K562 (cell line): ENCODE measurements at regions of chr20 and their contacts with region 1.

Region 1: GRCh38 chr20:50790651-50791277 is 4.1 kb upstream of the BCAS4 start:
- DNase-seq: peak; percentile 90 to 96 (median 92)
- ATAC-seq: peak; percentile 96
- H3K4me3 ChIP-seq: no peak overlapping the region
- H3K27ac ChIP-seq: peak overlapping the region; percentile 87
- H3K4me1 ChIP-seq: peaks cover 22 to 27% of the 10 kb centered on the region in 2 experiments
- H3K27me3 ChIP-seq: no peaks in the 10 kb centered on the region
- CTCF ChIP-seq: peak; percentile 85 to 90 (median 88)
- EP300 ChIP-seq: peak; percentile 57; the same call in 1 of the 2 replicates
- POLR2A ChIP-seq: peak; percentile 83
- RAD21 ChIP-seq: peak; percentile 45 to 47

Region 2: DNA sequence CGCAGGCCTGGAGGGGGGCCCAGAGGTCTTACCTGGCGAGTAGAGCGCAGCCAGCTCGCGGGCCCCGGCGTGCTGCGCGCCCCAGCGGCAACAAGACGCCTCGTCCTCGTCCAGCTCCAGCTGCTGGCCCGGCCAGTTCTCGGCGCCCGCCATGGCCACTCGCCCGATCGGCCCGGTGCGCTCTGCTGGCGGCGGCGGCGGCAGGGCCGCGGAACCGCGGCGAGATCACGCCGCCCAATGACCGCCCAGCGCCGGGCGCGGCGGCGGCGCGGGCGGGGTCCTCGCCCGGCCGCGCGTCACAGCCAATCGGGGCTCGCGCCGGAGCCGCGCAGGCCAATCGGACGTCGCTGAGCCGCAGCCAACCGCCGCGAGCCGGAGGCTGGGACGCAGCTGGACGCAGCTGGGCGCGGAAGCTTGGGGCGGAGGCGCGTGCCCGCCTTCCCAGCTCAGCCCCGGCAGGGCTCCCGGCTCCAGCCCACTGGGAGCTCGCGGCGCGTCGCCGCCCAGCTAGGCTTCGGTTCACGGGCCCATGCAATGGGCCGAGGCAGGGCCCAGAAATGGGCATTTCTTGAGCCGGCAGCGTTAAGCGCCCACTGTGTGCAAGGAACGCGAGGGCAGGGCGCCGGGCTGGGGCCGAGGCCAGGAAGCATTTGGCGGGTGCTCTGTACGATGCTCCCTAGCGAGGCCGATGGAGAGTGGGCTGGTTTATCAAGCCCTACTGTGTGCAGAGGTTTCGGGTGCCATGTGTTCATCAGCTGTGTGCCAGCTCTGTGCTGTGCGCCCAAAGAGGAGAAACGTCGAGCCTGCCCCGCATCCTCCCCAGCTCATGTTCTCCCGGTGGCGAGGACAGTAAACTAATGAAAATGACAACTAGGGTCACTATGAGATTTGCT is 637.0 kb before region 1 on chr20 and contains the start of gene PEDS1:
- CTCF ChIA-PET with region 1: no interaction called
- POLR2A ChIA-PET with region 1: no interaction called
- in situ Hi-C with region 1: no loop called
- intact Hi-C with region 1: no loop called
- DNase-seq: peak; percentile 93 to 98 (median 98)
- ATAC-seq: peak; percentile 97
- H3K4me3 ChIP-seq: peak within 1 kb of the TSS; percentile 93
- H3K27ac ChIP-seq: peak within 1 kb of the TSS; percentile 92
- H3K4me1 ChIP-seq: peaks cover 27 to 52% of the 10 kb centered on the region in 2 experiments
- H3K27me3 ChIP-seq: no peaks in the 10 kb centered on the region
- CTCF ChIP-seq: no peak
- EP300 ChIP-seq: no peak
- POLR2A ChIP-seq: peak; percentile 84
- RAD21 ChIP-seq: no peak
- polyA plus RNA-seq, gene PEDS1: 2.9 to 3.9 TPM

Region 3: GRCh38 chr20:50594591-50595432 is 196.0 kb before region 1 on chr20:
- CTCF ChIA-PET with region 1: no interaction called
- POLR2A ChIA-PET with region 1: no interaction called
- in situ Hi-C with region 1: no loop called
- intact Hi-C with region 1: loop called (anchors 5 kb)
- DNase-seq: peak in 2 of 4 experiments; percentile 31
- ATAC-seq: peak; percentile 18
- H3K4me3 ChIP-seq: no peak overlapping the region
- H3K27ac ChIP-seq: no peak overlapping the region
- H3K4me1 ChIP-seq: peaks cover 0 to 13% of the 10 kb centered on the region in 2 experiments; a peak in 1 of 5 replicates
- H3K27me3 ChIP-seq: no peaks in the 10 kb centered on the region
- CTCF ChIP-seq: no peak
- EP300 ChIP-seq: no peak
- POLR2A ChIP-seq: peak; percentile 19; the same call in 1 of the 2 replicates
- RAD21 ChIP-seq: no peak

Region 4: GRCh38 chr20:50625986-50626677 is 164.6 kb before region 1 on chr20:
- CTCF ChIA-PET with region 1: interaction called, 20 read pairs
- POLR2A ChIA-PET with region 1: interaction called, 3 read pairs
- in situ Hi-C with region 1: no loop called
- intact Hi-C with region 1: loop called (anchors 5 kb)
- DNase-seq: peak; percentile 68 to 78 (median 73)
- ATAC-seq: peak; percentile 91
- H3K4me3 ChIP-seq: no peak overlapping the region
- H3K27ac ChIP-seq: no peak overlapping the region
- H3K4me1 ChIP-seq: peaks cover 0 to 31% of the 10 kb centered on the region in 2 experiments; a peak in 3 of 5 replicates
- H3K27me3 ChIP-seq: no peaks in the 10 kb centered on the region
- CTCF ChIP-seq: peak; percentile 83 to 87 (median 83)
- EP300 ChIP-seq: no peak
- POLR2A ChIP-seq: no peak
- RAD21 ChIP-seq: peak; percentile 78 to 95

Region 5: GRCh38 chr20:50744143-50744792 is 46.5 kb before region 1 on chr20:
- CTCF ChIA-PET with region 1: no interaction called
- POLR2A ChIA-PET with region 1: no interaction called
- in situ Hi-C with region 1: no loop called
- intact Hi-C with region 1: loop called (anchors 1 kb)
- DNase-seq: peak; percentile 52 to 85 (median 67)
- ATAC-seq: peak; percentile 84
- H3K4me3 ChIP-seq: no peak overlapping the region
- H3K27ac ChIP-seq: peak overlapping the region; percentile 81
- H3K4me1 ChIP-seq: peaks cover 30 to 31% of the 10 kb centered on the region in 2 experiments
- H3K27me3 ChIP-seq: no peaks in the 10 kb centered on the region
- CTCF ChIP-seq: peak; percentile 43 to 74 (median 57); a peak in 5 of 6 replicates
- EP300 ChIP-seq: no peak
- POLR2A ChIP-seq: no peak; the same call in 1 of the 2 replicates
- RAD21 ChIP-seq: peak; percentile 47 to 68

Region 6: GRCh38 chr20:50762435-50763201 is 28.1 kb before region 1 on chr20:
- CTCF ChIA-PET with region 1: no interaction called
- POLR2A ChIA-PET with region 1: no interaction called
- in situ Hi-C with region 1: no loop called
- intact Hi-C with region 1: no loop called
- DNase-seq: no peak
- ATAC-seq: peak; percentile 39
- H3K4me3 ChIP-seq: no peak overlapping the region
- H3K27ac ChIP-seq: no peak overlapping the region
- H3K4me1 ChIP-seq: peaks cover 27 to 29% of the 10 kb centered on the region in 2 experiments
- H3K27me3 ChIP-seq: no peaks in the 10 kb centered on the region
- CTCF ChIP-seq: no peak
- EP300 ChIP-seq: no peak
- POLR2A ChIP-seq: no peak
- RAD21 ChIP-seq: no peak

Region 7: GRCh38 chr20:50929299-50930138 is 138.8 kb after region 1 on chr20:
- CTCF ChIA-PET with region 1: interaction called, 28 read pairs
- POLR2A ChIA-PET with region 1: interaction called, 9 read pairs
- in situ Hi-C with region 1: no loop called
- intact Hi-C with region 1: loop called (anchors 2 kb)
- DNase-seq: peak; percentile 80 to 98 (median 86)
- ATAC-seq: peak; percentile 87
- H3K4me3 ChIP-seq: peak overlapping the region; percentile 71
- H3K27ac ChIP-seq: peak overlapping the region; percentile 88
- H3K4me1 ChIP-seq: peaks cover 12 to 19% of the 10 kb centered on the region in 2 experiments
- H3K27me3 ChIP-seq: no peaks in the 10 kb centered on the region
- CTCF ChIP-seq: peak; percentile 100
- EP300 ChIP-seq: peak; percentile 76
- POLR2A ChIP-seq: peak; percentile 45
- RAD21 ChIP-seq: peak; percentile 87 to 91

Region 8: DNA sequence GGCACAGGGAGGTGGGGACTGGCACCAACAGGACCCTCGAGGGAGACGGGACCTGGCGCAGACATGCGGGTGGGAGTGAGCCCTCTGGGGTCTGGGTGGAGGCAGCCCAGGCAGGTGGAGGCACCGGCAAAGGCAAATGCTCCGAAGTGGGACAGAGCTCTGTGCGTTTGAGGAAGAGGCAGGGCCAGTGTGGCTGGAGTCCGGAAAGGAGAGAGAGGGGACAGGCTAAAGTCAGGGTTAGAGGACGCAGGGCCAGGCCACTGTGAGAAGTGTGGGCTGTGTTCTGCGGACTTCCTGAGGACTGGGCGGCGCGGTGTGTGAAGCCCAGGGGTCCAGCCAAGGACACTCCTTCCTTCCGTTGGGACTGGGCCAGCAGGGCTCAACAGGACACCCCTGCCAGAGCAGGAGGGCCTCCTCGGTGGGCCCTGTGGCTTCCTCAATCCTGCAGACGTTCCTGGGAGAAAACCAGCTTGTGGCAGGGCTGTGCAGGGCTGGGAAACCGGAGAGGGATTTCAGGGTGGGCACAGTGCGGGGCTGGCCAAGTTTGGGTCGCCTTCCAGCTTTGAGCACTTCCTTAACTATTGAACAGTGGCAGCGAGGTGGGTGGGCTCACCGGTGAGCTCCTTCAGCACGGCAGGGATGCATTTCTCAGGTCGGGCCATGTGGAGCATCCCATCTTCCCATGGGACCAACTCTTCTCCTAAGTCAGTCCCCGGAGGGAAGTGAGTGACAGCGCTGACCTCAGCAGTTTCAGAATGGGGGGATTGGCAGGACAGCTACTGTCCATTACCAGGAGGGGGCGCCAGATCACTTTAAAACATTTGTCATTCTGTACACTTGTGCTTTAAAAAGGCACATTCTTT is 190.3 kb after region 1 on chr20:
- CTCF ChIA-PET with region 1: interaction called, 8 read pairs
- POLR2A ChIA-PET with region 1: interaction called, 3 read pairs
- in situ Hi-C with region 1: no loop called
- intact Hi-C with region 1: loop called (anchors 5 kb)
- DNase-seq: peak; percentile 71 to 81 (median 76)
- ATAC-seq: peak; percentile 86
- H3K4me3 ChIP-seq: no peak overlapping the region
- H3K27ac ChIP-seq: no peak overlapping the region
- H3K4me1 ChIP-seq: peaks cover 0 to 9% of the 10 kb centered on the region in 2 experiments; a peak in 3 of 5 replicates
- H3K27me3 ChIP-seq: peaks cover 22 to 47% of the 10 kb centered on the region in 2 experiments
- CTCF ChIP-seq: peak; percentile 73 to 93 (median 84)
- EP300 ChIP-seq: no peak
- POLR2A ChIP-seq: no peak
- RAD21 ChIP-seq: peak; percentile 45 to 72

Region 9: GRCh38 chr20:51306503-51307358 is 516.0 kb after region 1 on chr20:
- CTCF ChIA-PET with region 1: interaction called, 12 read pairs
- POLR2A ChIA-PET with region 1: no interaction called
- in situ Hi-C with region 1: loop called (anchors 10 kb)
- intact Hi-C with region 1: loop called (anchors 10 kb)
- DNase-seq: peak; percentile 75 to 83 (median 82)
- ATAC-seq: peak; percentile 100
- H3K4me3 ChIP-seq: no peak overlapping the region
- H3K27ac ChIP-seq: no peak overlapping the region
- H3K4me1 ChIP-seq: peaks cover 0 to 5% of the 10 kb centered on the region in 2 experiments; a peak in 1 of 5 replicates
- H3K27me3 ChIP-seq: peaks cover 3 to 11% of the 10 kb centered on the region in 2 experiments; a peak in 3 of 5 replicates
- CTCF ChIP-seq: peak; percentile 88 to 89 (median 89)
- EP300 ChIP-seq: no peak
- POLR2A ChIP-seq: no peak
- RAD21 ChIP-seq: peak; percentile 93 to 96